Activated CD4-positive, alpha-beta memory T cell treated with anti-CD3 and anti-CD28 coated beads, Interleukin-2, amount 10 ng/mL, durations not matched to agents 7 days and 5 days (primary cell): ENCODE measurements at regions of chr20 and their contacts with region 1.

Region 1: DNA sequence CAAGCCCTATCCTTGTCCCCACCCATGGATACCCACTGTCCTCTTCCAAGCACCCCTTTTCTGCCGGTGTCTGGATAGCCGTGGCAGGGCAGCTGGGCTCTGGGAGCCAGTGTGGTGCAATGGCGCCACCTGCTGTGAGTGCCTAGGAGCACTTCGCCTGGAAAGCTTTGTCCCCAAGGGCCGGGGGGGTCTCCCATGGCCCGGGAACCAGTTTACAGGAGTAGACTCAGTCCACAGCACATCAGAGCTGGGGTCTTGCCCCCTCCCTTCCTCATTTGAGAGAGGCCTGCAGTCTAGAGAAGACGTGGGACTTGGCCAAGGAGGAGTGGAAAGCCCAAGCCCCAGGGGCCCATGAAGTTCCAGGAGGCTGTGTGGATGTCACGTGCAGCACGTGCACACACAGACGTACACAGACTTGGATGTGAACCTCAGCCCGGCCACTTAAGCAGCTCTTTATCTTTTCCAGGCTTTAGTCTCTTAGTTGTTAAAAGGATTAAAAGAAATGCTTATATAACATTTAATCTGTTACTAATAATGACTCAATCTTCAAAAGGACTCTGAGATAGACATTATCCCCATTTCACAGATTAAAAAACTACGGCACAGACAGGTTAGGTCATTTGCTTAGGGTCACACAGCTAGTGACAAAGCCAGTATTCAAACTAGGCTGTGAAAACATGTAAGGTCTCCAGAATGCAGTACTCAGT is 40.9 kb upstream of the CDH22 start:
- DNase-seq: peak; percentile 62
- H3K4me3 Mint-ChIP-seq: no peak overlapping the region
- H3K27ac Mint-ChIP-seq: no peak overlapping the region
- H3K4me1 Mint-ChIP-seq: peaks cover 24% of the 10 kb centered on the region
- H3K27me3 Mint-ChIP-seq: peaks cover 7% of the 10 kb centered on the region

Region 2: GRCh38 chr20:45450097-45450818 is 898.9 kb before region 1 on chr20:
- CTCF ChIA-PET with region 1: no interaction called
- POLR2A ChIA-PET with region 1: no interaction called
- DNase-seq: no peak
- H3K4me3 Mint-ChIP-seq: no peak overlapping the region
- H3K27ac Mint-ChIP-seq: no peak overlapping the region
- H3K4me1 Mint-ChIP-seq: peaks cover 10% of the 10 kb centered on the region
- H3K27me3 Mint-ChIP-seq: peaks cover 4% of the 10 kb centered on the region

Region 3: GRCh38 chr20:46363800-46364634 is 14.8 kb after region 1 on chr20:
- CTCF ChIA-PET with region 1: interaction called, 7 read pairs
- POLR2A ChIA-PET with region 1: interaction called, 13 read pairs
- DNase-seq: peak; percentile 88
- H3K4me3 Mint-ChIP-seq: peak overlapping the region; percentile 93
- H3K27ac Mint-ChIP-seq: peak overlapping the region; percentile 91
- H3K4me1 Mint-ChIP-seq: peaks cover 74% of the 10 kb centered on the region
- H3K27me3 Mint-ChIP-seq: no peaks in the 10 kb centered on the region

Region 4: DNA sequence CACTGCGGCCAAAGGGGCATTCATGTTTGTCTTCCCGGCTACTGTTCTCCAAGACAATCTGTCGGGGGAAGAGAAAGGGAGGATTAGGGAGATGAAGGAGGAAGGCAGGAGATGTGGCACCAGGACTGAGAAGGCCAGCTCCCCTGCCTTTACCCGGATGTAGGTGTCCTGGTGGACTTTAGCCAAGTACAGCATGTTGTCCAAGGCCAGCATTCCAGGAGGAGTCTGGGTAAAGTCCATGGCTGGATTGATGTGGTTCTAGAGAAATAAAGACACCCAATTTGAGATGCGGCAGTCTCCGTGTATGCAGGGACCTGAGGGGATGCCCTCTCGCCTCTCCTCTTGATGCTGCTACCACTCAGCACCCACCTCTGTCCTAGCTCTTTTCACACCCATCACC is 25.2 kb after region 1 on chr20:
- CTCF ChIA-PET with region 1: no interaction called
- POLR2A ChIA-PET with region 1: no interaction called
- DNase-seq: no peak
- H3K4me3 Mint-ChIP-seq: no peak overlapping the region
- H3K27ac Mint-ChIP-seq: no peak overlapping the region
- H3K4me1 Mint-ChIP-seq: peaks cover 3% of the 10 kb centered on the region
- H3K27me3 Mint-ChIP-seq: no peaks in the 10 kb centered on the region

Region 5: DNA sequence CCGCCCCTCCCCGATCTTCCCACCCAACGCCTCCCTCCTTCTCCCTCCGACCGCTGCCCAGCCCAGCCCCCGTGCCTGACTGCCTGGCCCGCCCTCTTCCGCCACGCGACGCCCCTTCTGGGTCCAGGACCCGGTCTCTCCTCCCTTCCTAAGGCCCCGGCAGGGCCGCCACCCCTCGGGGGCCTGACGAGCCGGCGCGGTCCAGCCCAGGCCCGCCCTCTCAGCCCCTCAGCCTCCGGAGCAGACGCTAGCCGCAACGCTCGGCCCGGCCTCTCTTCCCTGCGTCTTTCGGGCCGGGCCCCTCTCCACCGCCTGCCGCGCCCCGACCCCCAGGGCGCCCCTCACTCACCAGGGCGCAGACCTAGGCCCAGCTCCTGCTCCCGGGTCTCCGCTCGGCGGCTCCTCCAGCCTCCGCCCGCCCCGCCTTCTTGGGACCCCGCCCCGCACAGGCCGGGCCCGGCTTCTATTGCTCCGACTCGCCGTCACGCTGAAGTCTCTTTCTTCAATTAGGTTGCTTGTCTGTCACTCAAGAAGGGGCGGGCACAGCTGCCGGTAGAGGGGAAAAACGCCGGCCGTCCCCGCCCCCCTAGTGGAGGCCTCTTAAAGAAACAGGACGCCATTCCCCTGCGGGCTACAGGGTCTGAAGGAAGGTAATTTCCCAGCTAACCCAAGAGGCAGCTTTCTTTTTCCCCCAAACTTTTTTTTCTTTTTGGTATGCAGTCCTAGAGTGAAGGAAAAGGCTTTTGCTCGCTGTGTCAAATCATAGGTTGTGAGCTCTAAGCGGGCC is 57.2 kb after region 1 on chr20 and contains the start of gene ELMO2:
- CTCF ChIA-PET with region 1: interaction called, 12 read pairs
- POLR2A ChIA-PET with region 1: interaction called, 4 read pairs
- DNase-seq: peak; percentile 97
- H3K4me3 Mint-ChIP-seq: peak within 1 kb of the TSS; percentile 91
- H3K27ac Mint-ChIP-seq: peak within 1 kb of the TSS; percentile 93
- H3K4me1 Mint-ChIP-seq: peaks cover 69% of the 10 kb centered on the region
- H3K27me3 Mint-ChIP-seq: no peaks in the 10 kb centered on the region
- total RNA-seq, gene ELMO2: 85.6 to 97.6 TPM